PC-9 (cell line): ENCODE measurements at regions of chr9 and their contacts with region 1.

Region 1: DNA sequence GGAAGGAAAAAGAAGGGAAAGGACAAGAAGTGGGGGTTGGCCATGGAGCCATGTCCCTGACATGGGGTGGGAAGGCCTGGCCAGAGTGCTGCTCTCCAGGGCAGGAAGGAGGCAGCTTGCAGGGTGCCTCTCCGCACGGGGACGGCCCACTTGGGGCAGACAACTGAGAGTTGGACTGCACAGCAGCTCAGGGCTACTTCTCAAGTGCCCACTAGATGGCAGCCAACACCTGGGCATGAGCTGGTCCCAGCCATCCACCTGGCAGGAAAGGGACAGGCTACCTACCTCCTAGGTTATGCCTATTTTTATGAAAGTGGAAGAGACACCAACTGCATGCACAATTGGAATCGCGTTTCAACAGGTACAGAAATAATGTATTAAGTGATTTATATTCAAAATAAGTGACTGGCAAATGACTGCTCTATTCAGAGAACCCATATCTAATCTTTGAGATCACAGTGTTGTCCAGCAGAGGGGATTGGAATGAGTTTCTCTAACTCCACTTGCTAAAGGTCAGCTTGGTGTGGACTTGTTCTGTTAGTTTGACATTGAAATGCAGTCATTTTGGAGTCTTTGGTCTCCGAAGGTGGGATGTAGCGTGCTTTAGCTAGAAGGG is 113.4 kb downstream of the SYK start:
- DNase-seq: peak; percentile 56 to 75
- H3K4me3 ChIP-seq: no peak overlapping the region
- H3K27ac ChIP-seq: no peak overlapping the region
- H3K4me1 ChIP-seq: peaks cover 4% of the 10 kb centered on the region; the same call in 1 of the 2 replicates
- H3K27me3 ChIP-seq: no peaks in the 10 kb centered on the region
- CTCF ChIP-seq: peak; percentile 87

Region 2: GRCh38 chr9:90827181-90827871 is 87.7 kb before region 1 on chr9:
- CTCF ChIA-PET with region 1: no interaction called
- POLR2A ChIA-PET with region 1: no interaction called
- intact Hi-C with region 1: no loop called
- DNase-seq: no peak
- H3K4me3 ChIP-seq: no peak overlapping the region
- H3K27ac ChIP-seq: no peak overlapping the region
- H3K4me1 ChIP-seq: no peaks in the 10 kb centered on the region
- H3K27me3 ChIP-seq: no peaks in the 10 kb centered on the region
- CTCF ChIP-seq: no peak

Region 3: GRCh38 chr9:90964101-90965020 is 49.4 kb after region 1 on chr9:
- CTCF ChIA-PET with region 1: no interaction called
- POLR2A ChIA-PET with region 1: interaction called, 6 read pairs
- intact Hi-C with region 1: loop called (anchors 2 kb)
- DNase-seq: peak in 1 of 2 experiments; percentile 46
- H3K4me3 ChIP-seq: no peak overlapping the region
- H3K27ac ChIP-seq: no peak overlapping the region
- H3K4me1 ChIP-seq: peaks cover 13% of the 10 kb centered on the region
- H3K27me3 ChIP-seq: no peaks in the 10 kb centered on the region
- CTCF ChIP-seq: no peak

Region 4: DNA sequence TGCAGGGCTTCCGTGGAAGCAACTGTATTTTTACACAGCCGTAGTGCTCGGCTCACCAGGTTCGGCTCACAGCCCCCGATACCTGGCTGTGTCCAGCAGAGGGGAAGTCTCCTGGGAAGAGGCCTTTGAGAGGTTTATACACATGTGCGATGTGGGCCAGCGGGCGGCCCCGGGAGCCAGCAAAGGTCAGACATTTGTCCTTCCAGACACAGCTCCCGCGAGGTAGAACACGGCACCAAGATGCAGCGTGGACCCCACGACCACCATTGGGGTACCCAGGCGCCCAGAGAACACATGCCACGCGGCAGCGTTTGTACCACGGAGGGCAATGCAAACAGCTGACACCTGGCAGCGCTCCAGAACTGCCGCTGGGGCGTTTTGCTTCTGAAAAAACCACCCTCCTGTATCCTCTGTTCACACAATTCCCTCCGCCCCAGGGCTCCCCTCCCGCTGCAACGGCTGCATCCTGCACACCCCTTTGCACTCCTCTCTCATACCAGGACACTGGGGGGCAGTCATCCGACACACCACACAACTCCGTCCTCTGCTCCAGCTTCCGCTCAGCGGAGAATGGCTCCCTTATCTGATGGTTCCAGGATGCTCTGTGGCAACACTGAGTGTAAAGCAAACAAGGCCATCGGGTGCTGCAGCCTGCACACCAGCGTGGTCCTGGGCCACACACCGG is 122.0 kb after region 1 on chr9:
- CTCF ChIA-PET with region 1: interaction called, 6 read pairs
- POLR2A ChIA-PET with region 1: no interaction called
- intact Hi-C with region 1: loop called (anchors 2 kb)
- DNase-seq: peak; percentile 84 to 87
- H3K4me3 ChIP-seq: no peak overlapping the region; the same call in 1 of the 2 replicates
- H3K27ac ChIP-seq: peak overlapping the region; percentile 92
- H3K4me1 ChIP-seq: peaks cover 51% of the 10 kb centered on the region
- H3K27me3 ChIP-seq: no peaks in the 10 kb centered on the region
- CTCF ChIP-seq: peak; percentile 68

Region 5: DNA sequence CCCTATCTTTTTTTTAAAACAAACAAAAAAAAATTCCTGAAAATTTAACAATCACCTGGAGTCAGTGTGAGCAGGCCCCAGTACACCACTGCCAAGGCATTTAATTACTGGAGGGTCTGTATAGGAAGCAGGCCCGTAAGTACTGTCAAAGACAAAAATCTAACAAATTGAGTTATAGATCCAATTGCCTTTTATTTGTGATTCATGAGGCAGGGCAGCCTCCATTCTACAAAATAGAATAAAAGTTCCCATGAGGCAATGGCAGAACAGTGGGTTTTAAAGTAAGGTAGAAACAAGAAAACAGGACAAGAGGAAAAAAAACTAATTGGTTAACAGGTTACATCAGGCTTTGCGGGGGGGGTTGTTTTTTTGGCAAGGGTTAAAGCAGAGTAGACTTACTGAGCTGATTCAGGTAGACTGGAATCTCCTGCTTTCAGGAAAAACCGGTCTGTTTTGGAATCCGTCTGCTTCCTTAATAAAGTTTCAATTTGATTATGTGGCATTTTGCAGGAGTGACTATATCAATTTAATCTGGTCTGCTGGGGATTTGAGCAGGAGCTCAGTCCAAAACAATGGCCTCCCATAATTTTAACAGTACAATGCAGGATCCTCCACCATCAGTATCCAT is 397.9 kb after region 1 on chr9:
- CTCF ChIA-PET with region 1: no interaction called
- POLR2A ChIA-PET with region 1: no interaction called
- intact Hi-C with region 1: loop called (anchors 10 kb)
- DNase-seq: peak; percentile 74 to 98
- H3K4me3 ChIP-seq: no peak overlapping the region
- H3K27ac ChIP-seq: peak overlapping the region; percentile 85
- H3K4me1 ChIP-seq: peaks cover 55% of the 10 kb centered on the region
- H3K27me3 ChIP-seq: no peaks in the 10 kb centered on the region
- CTCF ChIP-seq: no peak

Region 6: GRCh38 chr9:91433180-91433579 is 518.2 kb after region 1 on chr9:
- CTCF ChIA-PET with region 1: interaction called, 8 read pairs
- POLR2A ChIA-PET with region 1: no interaction called
- intact Hi-C with region 1: loop called (anchors 2 kb)
- DNase-seq: peak; percentile 38 to 96
- H3K4me3 ChIP-seq: no peak overlapping the region
- H3K27ac ChIP-seq: peak overlapping the region; percentile 32; the same call in 1 of the 2 replicates
- H3K4me1 ChIP-seq: peaks cover 8% of the 10 kb centered on the region; the same call in 1 of the 2 replicates
- H3K27me3 ChIP-seq: no peaks in the 10 kb centered on the region
- CTCF ChIP-seq: peak; percentile 64

Region 7: DNA sequence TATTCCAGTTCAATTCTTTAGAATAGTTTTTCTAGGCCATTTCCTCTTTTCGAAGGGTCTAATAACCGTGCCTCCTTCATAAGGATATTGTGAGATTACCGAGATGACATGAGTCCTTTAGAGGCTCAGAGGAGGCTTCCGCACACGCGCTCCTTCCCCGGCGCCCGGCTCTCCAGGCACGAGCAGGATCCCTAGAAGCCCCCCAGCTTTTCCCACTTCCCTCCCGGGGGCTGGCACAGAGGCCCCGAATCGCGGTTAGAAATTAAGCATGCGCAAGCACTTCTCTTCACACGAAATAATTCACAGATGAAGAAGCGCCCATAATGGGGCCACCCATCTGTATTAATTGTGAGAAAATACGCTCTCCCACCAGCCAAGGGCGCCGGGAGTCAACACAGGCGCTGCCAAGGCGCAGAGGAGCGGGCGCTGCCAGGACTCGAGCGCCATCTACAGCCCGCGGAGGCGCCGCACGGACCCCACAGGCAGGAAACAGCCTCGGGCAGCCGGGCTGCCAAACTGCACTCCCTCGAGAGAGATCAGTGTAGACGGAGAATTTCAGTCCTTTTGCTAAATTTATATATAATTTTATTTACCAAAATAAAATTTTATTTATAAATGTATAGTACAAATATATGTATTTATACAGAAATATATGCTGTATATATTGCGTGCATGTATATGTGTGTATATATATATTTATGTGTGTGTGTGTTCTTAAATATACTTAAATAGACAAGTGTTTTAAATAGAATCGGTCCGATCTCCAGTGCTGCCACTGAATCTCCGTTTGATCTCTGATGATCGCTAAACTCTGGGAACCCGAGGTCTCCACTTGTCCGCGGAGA is 766.7 kb after region 1 on chr9:
- CTCF ChIA-PET with region 1: interaction called, 3 read pairs
- POLR2A ChIA-PET with region 1: no interaction called
- intact Hi-C with region 1: loop called (anchors 1 kb)
- DNase-seq: peak in 1 of 2 experiments; percentile 64
- H3K4me3 ChIP-seq: no peak overlapping the region
- H3K27ac ChIP-seq: no peak overlapping the region
- H3K4me1 ChIP-seq: no peaks in the 10 kb centered on the region
- H3K27me3 ChIP-seq: no peaks in the 10 kb centered on the region
- CTCF ChIP-seq: peak; percentile 72